GM12878 (cell line): ENCODE measurements at regions of chr19 and their contacts with region 1.

Region 1: GRCh38 chr19:40813182-40813958 is 14.4 kb downstream of the EGLN2 start:
- DNase-seq: no peak
- ATAC-seq: no peak
- H3K4me3 ChIP-seq: no peak overlapping the region
- H3K27ac ChIP-seq: no peak overlapping the region
- H3K4me1 ChIP-seq: peaks cover 4% of the 10 kb centered on the region
- H3K27me3 ChIP-seq: no peaks in the 10 kb centered on the region
- CTCF ChIP-seq: no peak
- EP300 ChIP-seq: no peak
- POLR2A ChIP-seq: peak; percentile 29; the same call in 1 of the 2 replicates
- RAD21 ChIP-seq: no peak

Region 2: GRCh38 chr19:40744554-40745401 is 68.6 kb before region 1 on chr19:
- CTCF ChIA-PET with region 1: interaction called, 26 read pairs
- POLR2A ChIA-PET with region 1: no interaction called
- RAD21 ChIA-PET with region 1: interaction called, 10 read pairs
- SMC1A ChIA-PET with region 1: interaction called, 7 read pairs
- in situ Hi-C with region 1: no loop called
- intact Hi-C with region 1: no loop called
- DNase-seq: no peak
- ATAC-seq: peak; percentile 44
- H3K4me3 ChIP-seq: no peak overlapping the region
- H3K27ac ChIP-seq: no peak overlapping the region
- H3K4me1 ChIP-seq: peaks cover 8% of the 10 kb centered on the region
- H3K27me3 ChIP-seq: no peaks in the 10 kb centered on the region
- CTCF ChIP-seq: peak; percentile 25 to 36 (median 32); a peak in 4 of 6 replicates
- EP300 ChIP-seq: no peak
- POLR2A ChIP-seq: no peak
- RAD21 ChIP-seq: peak; percentile 44

Region 3: GRCh38 chr19:40827386-40828247 is 14.2 kb after region 1 on chr19:
- CTCF ChIA-PET with region 1: no interaction called
- POLR2A ChIA-PET with region 1: no interaction called
- RAD21 ChIA-PET with region 1: no interaction called
- SMC1A ChIA-PET with region 1: no interaction called
- in situ Hi-C with region 1: no loop called
- intact Hi-C with region 1: no loop called
- DNase-seq: no peak
- ATAC-seq: no peak
- H3K4me3 ChIP-seq: no peak overlapping the region
- H3K27ac ChIP-seq: no peak overlapping the region
- H3K4me1 ChIP-seq: peaks cover 4% of the 10 kb centered on the region
- H3K27me3 ChIP-seq: no peaks in the 10 kb centered on the region
- CTCF ChIP-seq: no peak
- EP300 ChIP-seq: no peak
- POLR2A ChIP-seq: no peak
- RAD21 ChIP-seq: no peak

Region 4: GRCh38 chr19:40908976-40909375 is 95.6 kb after region 1 on chr19:
- CTCF ChIA-PET with region 1: no interaction called
- POLR2A ChIA-PET with region 1: no interaction called
- RAD21 ChIA-PET with region 1: no interaction called
- SMC1A ChIA-PET with region 1: no interaction called
- in situ Hi-C with region 1: no loop called
- intact Hi-C with region 1: no loop called
- DNase-seq: no peak
- ATAC-seq: peak; percentile 63
- H3K4me3 ChIP-seq: no peak overlapping the region
- H3K27ac ChIP-seq: no peak overlapping the region
- H3K4me1 ChIP-seq: no peaks in the 10 kb centered on the region
- H3K27me3 ChIP-seq: no peaks in the 10 kb centered on the region; a peak in 2 of 4 replicates
- CTCF ChIP-seq: peak; percentile 31 to 40 (median 37); a peak in 4 of 6 replicates
- EP300 ChIP-seq: no peak
- POLR2A ChIP-seq: no peak
- RAD21 ChIP-seq: 0 out of 2 replicates have a peak, but pooled peaks have one; percentile 28

Region 5: GRCh38 chr19:41039806-41040205 is 226.4 kb after region 1 on chr19:
- CTCF ChIA-PET with region 1: no interaction called
- POLR2A ChIA-PET with region 1: no interaction called
- RAD21 ChIA-PET with region 1: no interaction called
- SMC1A ChIA-PET with region 1: no interaction called
- in situ Hi-C with region 1: no loop called
- intact Hi-C with region 1: no loop called
- DNase-seq: no peak
- ATAC-seq: no peak
- H3K4me3 ChIP-seq: no peak overlapping the region
- H3K27ac ChIP-seq: no peak overlapping the region
- H3K4me1 ChIP-seq: no peaks in the 10 kb centered on the region
- H3K27me3 ChIP-seq: no peaks in the 10 kb centered on the region
- CTCF ChIP-seq: no peak
- EP300 ChIP-seq: no peak
- POLR2A ChIP-seq: no peak
- RAD21 ChIP-seq: no peak